Activated naive CD4-positive, alpha-beta T cell treated with anti-CD3 and anti-CD28 coated beads for 36 hours (primary cell): ENCODE measurements at regions of chr5 and their contacts with region 1.

Region 1: GRCh38 chr5:132386644-132387286 is 17.3 kb downstream of the SLC22A5 start:
- DNase-seq: peak; percentile 88
- H3K4me3 Mint-ChIP-seq: no peak overlapping the region
- H3K27ac Mint-ChIP-seq: peak overlapping the region; percentile 69
- H3K4me1 Mint-ChIP-seq: peaks cover 40% of the 10 kb centered on the region
- H3K27me3 Mint-ChIP-seq: no peaks in the 10 kb centered on the region

Region 2: DNA sequence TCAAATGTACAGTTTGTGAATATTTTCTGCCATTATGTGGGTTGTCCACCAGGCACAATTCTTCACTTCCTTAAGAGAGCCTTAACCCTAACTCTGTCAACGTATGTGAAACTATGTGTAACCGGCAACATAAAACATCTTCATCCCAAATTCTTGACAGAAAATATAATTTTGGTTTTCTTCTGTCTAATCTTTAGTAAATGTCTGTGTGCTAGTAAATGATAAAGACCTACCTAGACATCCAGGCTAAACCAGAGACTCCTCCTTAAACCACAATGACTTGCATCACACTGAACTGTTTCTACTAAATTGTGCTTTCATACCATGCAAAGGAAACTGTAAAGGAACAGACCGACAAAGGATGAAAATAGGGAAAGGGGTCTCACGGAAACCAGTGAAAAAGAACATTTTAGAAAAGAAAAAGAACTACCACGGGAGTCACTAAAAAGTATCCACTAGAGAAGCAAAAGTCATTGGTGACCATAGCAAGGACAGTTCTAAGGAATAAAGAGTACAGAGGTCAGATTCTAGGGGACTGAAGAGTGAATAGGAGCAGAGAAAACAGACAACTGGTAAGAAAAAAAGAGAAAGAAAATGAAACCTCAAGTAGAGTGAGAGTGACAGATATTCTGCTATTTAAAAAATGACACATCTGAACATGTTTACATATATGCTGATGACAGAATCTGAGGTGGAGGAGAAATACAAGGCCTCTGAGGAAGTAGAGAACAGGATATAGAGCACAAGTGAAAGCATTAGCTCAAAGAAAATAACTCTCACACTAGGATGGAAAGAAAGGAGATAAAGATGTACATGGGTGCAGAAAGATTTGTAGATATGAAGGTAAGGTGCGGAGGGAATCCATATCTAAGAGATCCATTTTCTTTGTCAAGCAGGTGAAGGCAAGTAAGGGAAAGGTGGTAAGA is 639.3 kb before region 1 on chr5:
- CTCF ChIA-PET with region 1: no interaction called
- intact Hi-C with region 1: no loop called
- DNase-seq: no peak
- H3K4me3 Mint-ChIP-seq: peak overlapping the region; percentile 49
- H3K27ac Mint-ChIP-seq: peak overlapping the region; percentile 85
- H3K4me1 Mint-ChIP-seq: peaks cover 37% of the 10 kb centered on the region
- H3K27me3 Mint-ChIP-seq: no peaks in the 10 kb centered on the region

Region 3: GRCh38 chr5:132272311-132273210 is 114.2 kb before region 1 on chr5:
- CTCF ChIA-PET with region 1: no interaction called
- intact Hi-C with region 1: loop called (anchors 2 kb)
- DNase-seq: peak; percentile 82
- H3K4me3 Mint-ChIP-seq: no peak overlapping the region
- H3K27ac Mint-ChIP-seq: no peak overlapping the region
- H3K4me1 Mint-ChIP-seq: peaks cover 12% of the 10 kb centered on the region
- H3K27me3 Mint-ChIP-seq: peaks cover 20% of the 10 kb centered on the region

Region 4: DNA sequence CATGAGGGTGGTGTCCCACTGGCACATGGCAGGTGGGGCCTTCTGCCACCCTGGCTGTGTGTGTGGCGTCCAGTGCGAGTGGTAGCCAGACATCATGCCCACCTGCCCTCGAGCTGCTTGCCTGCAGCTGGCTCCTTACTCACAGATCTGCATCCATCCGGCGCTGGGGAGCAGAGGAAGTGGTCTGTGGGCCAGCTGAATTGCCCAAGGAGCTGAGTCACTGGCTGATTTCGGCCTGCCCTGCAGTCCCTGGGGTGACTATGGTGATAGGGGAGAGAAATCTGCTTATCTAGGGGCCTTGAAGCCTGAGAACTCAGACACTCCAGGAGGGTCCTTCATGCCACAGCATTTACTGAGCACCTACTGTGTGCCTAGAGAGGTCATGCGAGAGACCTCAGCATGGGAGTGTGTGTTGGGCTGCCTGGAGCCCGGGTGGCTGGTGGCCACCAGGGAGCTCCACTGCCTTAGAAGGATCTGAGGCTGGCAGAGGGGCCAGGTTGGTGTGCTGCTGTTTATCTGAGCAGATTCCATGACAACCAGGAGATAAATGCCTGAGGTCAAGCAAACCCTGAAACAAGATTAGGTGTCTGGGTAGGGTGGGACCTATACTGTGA is 39.9 kb after region 1 on chr5:
- CTCF ChIA-PET with region 1: interaction called, 13 read pairs
- intact Hi-C with region 1: no loop called
- DNase-seq: peak; percentile 83
- H3K4me3 Mint-ChIP-seq: peak overlapping the region; percentile 46
- H3K27ac Mint-ChIP-seq: peak overlapping the region; percentile 95
- H3K4me1 Mint-ChIP-seq: peaks cover 94% of the 10 kb centered on the region
- H3K27me3 Mint-ChIP-seq: no peaks in the 10 kb centered on the region

Region 5: GRCh38 chr5:132495667-132496190 is 109.0 kb after region 1 on chr5:
- CTCF ChIA-PET with region 1: interaction called, 466 read pairs
- intact Hi-C with region 1: no loop called
- DNase-seq: peak; percentile 79
- H3K4me3 Mint-ChIP-seq: peak overlapping the region; percentile 84
- H3K27ac Mint-ChIP-seq: peak overlapping the region; percentile 91
- H3K4me1 Mint-ChIP-seq: peaks cover 56% of the 10 kb centered on the region
- H3K27me3 Mint-ChIP-seq: no peaks in the 10 kb centered on the region

Region 6: DNA sequence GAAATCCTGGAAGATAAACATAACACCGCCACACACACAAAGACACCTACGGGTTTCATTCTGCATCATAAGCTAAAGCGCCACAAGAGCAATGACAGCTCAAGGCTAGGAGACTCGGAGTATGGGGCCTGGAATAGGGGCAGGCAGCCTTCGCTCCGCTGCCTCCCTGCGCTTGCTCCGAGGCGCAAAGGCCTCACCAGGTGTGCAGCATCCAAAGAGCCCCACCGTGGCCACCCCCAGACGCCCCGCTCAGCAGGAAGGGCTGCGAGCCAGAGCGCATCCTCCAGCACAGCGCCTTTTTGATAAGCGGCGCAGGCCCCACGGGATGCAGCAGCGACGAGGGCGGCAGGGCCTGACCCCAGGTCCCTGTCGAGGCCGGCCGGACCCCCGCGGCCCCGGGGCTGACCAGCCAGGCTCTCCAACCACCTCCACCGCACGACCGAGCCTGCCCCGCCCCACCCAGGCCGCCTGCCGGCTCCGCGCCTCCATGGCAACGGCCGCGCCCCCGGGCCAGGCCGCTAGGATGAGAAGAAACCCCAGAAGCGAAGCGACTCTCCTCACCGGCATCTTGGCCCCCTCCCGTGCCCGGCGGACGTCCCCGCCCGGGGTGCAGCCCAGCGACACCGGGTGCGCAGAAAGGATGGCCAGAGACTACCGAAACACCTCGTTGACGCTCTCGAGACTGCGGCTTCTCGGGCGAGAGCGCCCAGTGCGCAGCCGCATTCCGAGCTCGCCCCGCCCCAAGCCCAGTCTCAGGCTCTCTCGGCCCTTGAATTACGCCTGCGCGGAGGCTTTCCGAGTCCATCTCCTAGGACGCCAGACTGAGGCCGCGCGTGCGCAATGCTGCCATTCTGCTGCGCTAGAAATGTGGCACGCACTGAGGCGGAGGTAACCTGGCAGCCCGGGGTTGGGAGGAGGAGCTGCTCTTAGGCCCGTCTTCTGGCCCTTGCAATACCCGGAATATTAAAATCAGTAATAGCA is 350.4 kb after region 1 on chr5 and contains the start of gene KIF3A:
- CTCF ChIA-PET with region 1: interaction called, 4 read pairs
- intact Hi-C with region 1: loop called (anchors 5 kb)
- DNase-seq: peak; percentile 99
- H3K4me3 Mint-ChIP-seq: peak within 1 kb of the TSS; percentile 84
- H3K27ac Mint-ChIP-seq: peak within 1 kb of the TSS; percentile 50
- H3K4me1 Mint-ChIP-seq: peaks cover 27% of the 10 kb centered on the region
- H3K27me3 Mint-ChIP-seq: no peaks in the 10 kb centered on the region
- total RNA-seq, gene KIF3A: 5.0 to 6.1 TPM